ENCODE measurements at regions of chr19 and their contacts with region 1.

Region 1: DNA sequence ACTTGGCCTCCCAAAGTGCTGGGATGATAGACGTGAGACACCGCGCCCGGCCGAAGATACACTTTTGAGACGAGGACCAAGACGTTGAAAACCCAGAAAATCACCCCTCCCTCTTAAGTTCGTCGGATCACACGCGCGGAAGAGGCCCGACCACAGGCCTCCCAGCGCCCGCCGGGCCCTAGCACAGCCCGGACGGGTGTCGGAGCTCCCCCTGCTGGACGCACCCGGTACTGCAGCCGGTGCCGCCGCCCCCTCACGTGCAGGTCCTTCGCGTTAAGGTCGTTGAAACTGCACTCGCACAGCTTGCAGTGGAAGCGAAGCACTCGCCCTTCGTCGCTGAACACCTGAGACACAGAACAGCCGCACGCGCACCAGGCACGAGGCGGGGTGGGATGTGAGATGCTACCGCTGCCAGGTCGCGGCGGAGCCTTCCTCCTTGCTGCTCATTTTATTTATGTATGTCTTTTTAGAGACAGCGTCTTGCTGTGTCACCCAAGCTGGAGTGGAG is 35.7 kb upstream of the MATK start:
- DNase-seq: peak; percentile 72
- H3K4me3 ChIP-seq: no peak overlapping the region
- H3K27ac ChIP-seq: no peak overlapping the region
- H3K4me1 ChIP-seq: no peaks in the 10 kb centered on the region
- H3K27me3 ChIP-seq: no peaks in the 10 kb centered on the region
- CTCF ChIP-seq: peak; percentile 99

Region 2: DNA sequence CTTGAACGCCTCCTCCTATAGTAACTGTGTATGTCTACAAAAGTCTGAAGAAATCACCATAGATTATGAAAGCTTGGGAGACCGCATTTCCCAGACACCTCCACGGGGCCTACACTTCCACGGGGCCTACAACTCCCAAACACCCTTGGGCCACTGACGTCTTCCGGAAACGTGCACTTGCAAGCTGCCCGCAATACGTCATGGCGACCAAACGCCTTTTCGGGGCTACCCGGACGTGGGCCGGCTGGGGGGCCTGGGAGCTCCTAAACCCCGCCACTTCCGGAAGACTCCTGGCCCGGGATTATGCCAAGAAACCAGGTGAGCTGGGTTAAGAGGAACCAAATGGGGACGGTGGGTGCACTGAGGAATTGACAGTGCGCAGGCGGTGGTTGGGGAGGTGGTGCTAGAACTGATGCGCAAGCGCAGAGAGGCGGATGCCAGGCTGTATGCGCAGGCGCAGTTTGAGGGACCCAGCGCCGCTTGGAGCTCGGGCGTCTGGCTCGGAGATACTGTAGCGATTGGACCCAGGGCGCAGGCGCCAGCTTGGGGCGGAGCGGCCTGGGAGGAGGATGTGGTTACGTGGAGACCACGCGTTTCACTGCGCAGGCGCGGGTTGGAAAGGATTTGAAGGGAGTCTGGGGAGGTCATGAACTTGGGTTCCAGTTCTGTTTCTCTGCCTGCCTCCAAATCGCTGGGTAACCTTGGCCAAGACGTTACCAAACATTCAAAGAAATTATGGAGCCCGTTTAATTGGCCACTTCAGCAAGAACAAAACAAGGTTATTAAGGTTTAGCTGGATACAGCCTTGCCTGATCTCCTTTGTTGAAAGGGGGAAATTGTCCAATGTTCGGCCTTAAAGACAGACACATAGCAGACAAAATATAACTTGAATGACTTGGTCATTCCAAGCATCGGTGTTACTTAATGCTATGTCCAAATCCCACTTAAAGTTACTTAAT is 59.1 kb before region 1 on chr19 and contains the start of gene MRPL54:
- intact Hi-C with region 1: loop called (anchors 10 kb)
- DNase-seq: peak; percentile 99
- H3K4me3 ChIP-seq: peak within 1 kb of the TSS; percentile 80
- H3K27ac ChIP-seq: peak within 1 kb of the TSS; percentile 90
- H3K4me1 ChIP-seq: peaks cover 7% of the 10 kb centered on the region
- H3K27me3 ChIP-seq: no peaks in the 10 kb centered on the region
- CTCF ChIP-seq: no peak
- total RNA-seq, gene MRPL54: 73.7 to 86.9 TPM

Region 3: GRCh38 chr19:3852614-3853254 is 30.8 kb after region 1 on chr19:
- intact Hi-C with region 1: no loop called
- DNase-seq: peak; percentile 41
- H3K4me3 ChIP-seq: no peak overlapping the region
- H3K27ac ChIP-seq: no peak overlapping the region
- H3K4me1 ChIP-seq: no peaks in the 10 kb centered on the region
- H3K27me3 ChIP-seq: no peaks in the 10 kb centered on the region
- CTCF ChIP-seq: no peak

Region 4: GRCh38 chr19:3868770-3869456 is 47.0 kb after region 1 on chr19 and contains the start of gene ZFR2:
- intact Hi-C with region 1: no loop called
- DNase-seq: no peak
- H3K4me3 ChIP-seq: no peak within 1 kb of the TSS
- H3K27ac ChIP-seq: no peak within 1 kb of the TSS
- H3K4me1 ChIP-seq: no peaks in the 10 kb centered on the region
- H3K27me3 ChIP-seq: peaks cover 21% of the 10 kb centered on the region
- CTCF ChIP-seq: no peak
- total RNA-seq, gene ZFR2: not detected

Measured in colonic mucosa (tissue), 4 donors.